Left ventricle myocardium inferior (tissue), 1 donor: ENCODE measurements at regions of chr14 and their contacts with region 1.

Region 1: DNA sequence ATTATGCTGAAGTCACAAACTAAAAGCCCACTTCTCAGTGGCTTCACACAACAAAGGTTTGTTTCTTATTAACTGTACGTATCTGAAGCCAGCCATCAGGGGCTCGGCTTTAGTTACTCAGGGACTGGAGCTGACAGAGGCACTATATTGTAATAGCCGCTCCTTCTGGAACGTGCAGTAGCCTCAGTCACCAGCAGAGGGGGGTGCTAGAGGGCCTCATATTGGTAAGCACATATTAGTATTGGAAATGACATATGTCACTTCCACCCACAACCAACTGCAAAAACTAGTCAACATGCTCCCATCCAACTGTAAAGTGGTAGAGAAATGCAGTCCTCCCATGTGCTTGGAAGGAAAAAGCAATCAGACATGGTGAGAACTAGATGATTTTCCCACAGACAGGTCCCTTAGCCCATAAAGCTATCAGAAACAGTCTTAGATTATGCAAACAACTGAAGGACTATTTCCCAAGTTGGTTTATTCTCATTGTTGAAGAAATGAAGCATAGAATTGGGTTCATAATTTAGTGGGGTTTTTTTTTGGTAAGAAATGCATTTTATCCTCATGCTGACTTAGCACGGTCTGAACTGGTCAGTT is 183.6 kb upstream of the G2E3 start:
- DNase-seq: peak; percentile 47
- H3K4me3 ChIP-seq: no peak overlapping the region
- H3K27ac ChIP-seq: no peak overlapping the region
- H3K4me1 ChIP-seq: no peaks in the 10 kb centered on the region
- H3K27me3 ChIP-seq: peaks cover 15% of the 10 kb centered on the region
- CTCF ChIP-seq: peak; percentile 85

Region 2: DNA sequence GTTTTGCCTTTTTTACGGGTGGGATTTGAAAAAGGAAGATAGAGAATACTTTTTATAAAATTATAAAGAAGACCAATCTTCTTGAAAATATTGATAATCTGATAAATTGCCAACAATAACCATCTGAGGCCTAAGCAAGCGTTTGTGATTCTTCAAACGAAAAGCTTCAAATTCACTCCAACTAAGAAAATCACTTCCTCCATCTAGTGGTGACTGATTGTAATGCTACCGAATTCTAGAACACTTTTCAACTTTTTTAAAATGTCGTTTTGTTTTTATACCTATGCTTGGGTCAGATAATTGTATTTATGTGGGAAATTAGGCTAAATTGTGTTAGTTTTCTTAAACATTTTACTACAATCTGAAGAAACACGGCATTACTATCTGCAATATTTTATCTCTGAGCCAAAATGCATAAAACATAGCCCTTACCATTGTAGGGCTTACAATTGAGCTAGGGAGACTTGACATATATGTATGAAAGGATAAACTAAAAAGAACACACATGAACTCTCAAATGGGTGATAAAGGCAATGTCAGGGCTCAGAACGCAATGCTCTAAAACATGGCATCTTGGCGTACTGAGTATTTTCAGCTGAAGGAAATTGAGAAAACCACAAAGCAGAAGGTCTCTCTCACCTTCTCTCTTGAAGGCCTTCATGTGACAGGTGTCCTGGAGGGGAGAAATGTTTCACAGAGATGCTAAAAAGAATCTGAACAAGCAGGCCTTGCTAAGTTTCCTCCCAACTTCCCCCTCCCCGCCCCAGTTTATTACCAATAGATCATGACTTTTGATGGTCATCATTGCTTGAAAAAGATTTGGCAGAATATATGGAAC is 146.7 kb after region 1 on chr14:
- intact Hi-C with region 1: loop called (anchors 5 kb)
- DNase-seq: no peak
- H3K4me3 ChIP-seq: no peak overlapping the region
- H3K27ac ChIP-seq: no peak overlapping the region
- H3K4me1 ChIP-seq: no peaks in the 10 kb centered on the region
- H3K27me3 ChIP-seq: no peaks in the 10 kb centered on the region
- CTCF ChIP-seq: peak; percentile 80

Region 3: DNA sequence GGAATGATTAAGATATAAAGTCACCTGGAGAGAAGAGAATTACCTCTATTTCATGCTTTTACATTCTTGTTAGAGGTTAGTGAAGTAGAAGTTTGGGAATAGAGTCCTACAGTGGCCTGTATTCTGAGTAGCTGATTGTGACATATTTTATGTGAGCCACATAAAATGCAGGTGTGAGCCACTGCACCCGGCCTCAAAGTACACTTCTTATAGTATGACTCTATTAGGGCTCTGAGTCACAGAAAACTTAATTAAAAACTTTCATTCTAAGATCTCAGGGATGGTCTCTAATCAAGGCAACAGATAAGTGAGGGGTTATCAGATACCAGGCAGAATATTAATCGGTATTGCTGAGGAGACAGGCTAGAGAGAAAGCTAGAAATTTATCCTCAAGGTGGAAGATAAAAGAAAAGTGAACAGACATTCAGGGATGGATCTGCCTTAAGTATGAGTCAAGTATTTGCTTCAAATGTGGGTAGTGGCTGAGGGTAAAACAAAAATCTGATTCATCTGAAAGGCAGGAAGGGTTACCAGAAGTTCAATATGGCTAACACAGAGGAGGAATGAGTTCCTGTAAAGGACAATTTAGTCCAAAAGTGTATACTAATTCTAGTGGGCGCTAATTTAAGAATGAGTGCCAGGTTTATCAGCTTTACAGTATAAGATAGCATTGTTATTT is 178.1 kb after region 1 on chr14:
- intact Hi-C with region 1: no loop called
- DNase-seq: no peak
- H3K4me3 ChIP-seq: no peak overlapping the region
- H3K27ac ChIP-seq: no peak overlapping the region
- H3K4me1 ChIP-seq: peaks cover 3% of the 10 kb centered on the region
- H3K27me3 ChIP-seq: peaks cover 14% of the 10 kb centered on the region
- CTCF ChIP-seq: no peak